ENCODE measurements at regions of chr20 and their contacts with region 1.

Region 1: GRCh38 chr20:41329435-41330342 is 10.9 kb upstream of the LPIN3 start:
- DNase-seq: peak; percentile 33
- ATAC-seq: peak; percentile 100
- H3K4me3 Mint-ChIP-seq: peak overlapping the region; percentile 6
- H3K27ac Mint-ChIP-seq: peak overlapping the region; percentile 59
- H3K4me1 Mint-ChIP-seq: peaks cover 12% of the 10 kb centered on the region
- H3K27me3 Mint-ChIP-seq: no peaks in the 10 kb centered on the region
- CTCF ChIP-seq: no peak

Region 2: GRCh38 chr20:41317536-41318270 is 12.0 kb before region 1 on chr20 and contains the start of gene ZHX3:
- CTCF ChIA-PET with region 1: no interaction called
- POLR2A ChIA-PET with region 1: interaction called, 4 read pairs
- intact Hi-C with region 1: loop called (anchors 1 kb)
- DNase-seq: peak; percentile 99
- ATAC-seq: peak; percentile 97
- H3K4me3 Mint-ChIP-seq: peak within 1 kb of the TSS; percentile 91
- H3K27ac Mint-ChIP-seq: peak within 1 kb of the TSS; percentile 87
- H3K4me1 Mint-ChIP-seq: peaks cover 23% of the 10 kb centered on the region
- H3K27me3 Mint-ChIP-seq: no peaks in the 10 kb centered on the region
- CTCF ChIP-seq: no peak
- total RNA-seq, gene ZHX3: 19.5 and 21.2 TPM in 2 replicates

Measured in activated B cell treated with CpG ODN at 0.5 μM for 24 hours (primary cell).